Ovary (tissue), 10 donors: ENCODE measurements at regions of chr1 and their contacts with region 1.

Region 1: GRCh38 chr1:11838349-11839272 is 9.0 kb downstream of the NPPA start:
- DNase-seq: peak; percentile 66 to 84 (median 78)
- H3K4me3 ChIP-seq: no peak overlapping the region
- H3K27ac ChIP-seq: no peak overlapping the region
- H3K4me1 ChIP-seq: peaks cover 6% of the 10 kb centered on the region
- H3K27me3 ChIP-seq: no peaks in the 10 kb centered on the region
- CTCF ChIP-seq: peak; percentile 85 to 87 (median 85)
- EP300 ChIP-seq: no peak
- POLR2A ChIP-seq: no peak

Region 2: DNA sequence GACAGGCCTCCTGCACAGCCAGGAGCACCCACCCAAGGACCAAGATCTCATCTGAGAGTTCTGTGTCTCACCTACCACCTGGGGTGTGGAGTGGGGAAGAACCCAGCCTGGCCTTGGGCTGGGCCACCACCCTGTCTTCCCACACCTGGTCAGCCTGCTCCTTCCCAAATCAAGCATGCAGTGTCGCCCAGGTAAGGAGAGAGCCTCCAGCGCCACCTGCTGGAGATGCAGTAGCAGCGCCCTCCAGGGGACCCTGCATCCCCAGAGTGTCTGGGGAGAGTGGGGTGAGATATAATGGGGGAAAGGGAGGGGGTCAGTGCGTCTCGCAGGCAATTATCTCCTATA is 55.3 kb after region 1 on chr1:
- intact Hi-C with region 1: loop called (anchors 5 to 10 kb)
- DNase-seq: peak; percentile 37 to 65 (median 50)
- H3K4me3 ChIP-seq: no peak overlapping the region
- H3K27ac ChIP-seq: no peak overlapping the region
- H3K4me1 ChIP-seq: no peaks in the 10 kb centered on the region
- H3K27me3 ChIP-seq: no peaks in the 10 kb centered on the region
- CTCF ChIP-seq: peak; percentile 30 to 67 (median 46)
- EP300 ChIP-seq: no peak
- POLR2A ChIP-seq: no peak

Region 3: DNA sequence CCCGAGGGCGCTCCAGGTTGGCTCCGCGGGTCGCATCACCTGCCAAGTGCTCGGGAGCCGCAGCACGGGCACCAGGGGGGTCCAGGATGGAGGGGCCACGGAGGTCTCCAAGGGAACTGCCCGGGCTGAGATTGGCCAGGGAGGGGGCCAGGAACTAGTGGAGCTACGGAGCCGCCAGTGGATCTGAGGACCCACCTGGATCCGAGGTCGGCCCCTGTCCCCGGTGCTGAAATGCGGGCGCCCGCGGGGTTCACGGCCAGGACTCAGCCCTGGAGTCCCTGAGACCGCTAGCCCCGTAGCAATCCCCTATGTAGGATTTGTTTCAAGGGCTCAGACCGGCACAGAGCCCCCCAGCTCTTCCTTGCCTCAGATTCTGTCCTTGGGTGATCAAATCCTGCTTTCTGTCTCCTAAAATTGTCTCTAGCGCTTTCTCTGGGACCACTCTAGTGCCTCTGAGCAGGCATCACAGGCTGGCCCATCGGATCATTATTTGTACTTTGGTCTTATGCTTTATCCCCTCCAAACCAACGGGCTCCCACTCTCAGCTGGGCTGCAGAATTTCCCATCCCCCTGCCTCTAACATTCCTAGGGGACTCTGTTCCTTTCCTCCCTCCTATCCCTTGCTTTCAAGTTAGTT is 60.3 kb after region 1 on chr1:
- intact Hi-C with region 1: loop called (anchors 5 to 10 kb)
- DNase-seq: no peak
- H3K4me3 ChIP-seq: no peak overlapping the region
- H3K27ac ChIP-seq: no peak overlapping the region
- H3K4me1 ChIP-seq: no peaks in the 10 kb centered on the region
- H3K27me3 ChIP-seq: no peaks in the 10 kb centered on the region
- CTCF ChIP-seq: no peak
- EP300 ChIP-seq: no peak
- POLR2A ChIP-seq: no peak

Region 4: GRCh38 chr1:11907275-11908094 is 68.9 kb after region 1 on chr1:
- intact Hi-C with region 1: loop called in 1 of 4 experiments (anchors 5 kb)
- DNase-seq: peak; percentile 89 to 96 (median 94)
- H3K4me3 ChIP-seq: no peak overlapping the region
- H3K27ac ChIP-seq: peak overlapping the region; percentile 35 to 97
- H3K4me1 ChIP-seq: no peaks in the 10 kb centered on the region
- H3K27me3 ChIP-seq: no peaks in the 10 kb centered on the region
- CTCF ChIP-seq: peak; percentile 80 to 93 (median 91)
- EP300 ChIP-seq: peak; percentile 61
- POLR2A ChIP-seq: no peak

Region 5: DNA sequence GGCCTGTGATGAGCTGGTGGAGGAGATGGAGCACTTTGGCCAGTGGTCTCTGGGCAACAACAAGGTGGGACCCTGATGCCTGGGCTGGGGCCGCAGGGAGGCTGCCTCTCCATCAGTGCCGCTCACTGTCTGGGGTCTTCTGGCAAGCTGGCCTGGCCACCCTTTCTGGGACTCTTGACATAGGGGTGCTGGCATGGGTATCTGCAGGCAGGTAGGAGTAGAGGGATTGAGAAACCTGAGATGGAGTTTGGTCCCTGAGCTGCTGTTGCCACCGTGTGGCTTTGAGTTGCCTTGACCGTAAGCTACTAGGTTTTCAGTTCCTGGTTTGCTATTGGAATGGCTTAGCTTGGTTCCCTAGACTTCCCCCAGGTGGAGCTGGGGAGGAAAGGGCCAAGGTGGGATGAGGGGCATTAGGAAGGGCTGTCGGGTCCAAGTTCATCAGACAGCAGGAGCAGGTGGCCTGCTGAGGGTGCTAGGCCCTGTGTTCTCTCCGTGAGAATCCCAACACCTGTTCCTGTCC is 128.5 kb after region 1 on chr1:
- intact Hi-C with region 1: loop called in 3 of 4 experiments (anchors 5 to 10 kb)
- DNase-seq: peak in 3 of 5 donors; percentile 29 to 60 (median 33)
- H3K4me3 ChIP-seq: no peak overlapping the region
- H3K27ac ChIP-seq: no peak overlapping the region
- H3K4me1 ChIP-seq: no peaks in the 10 kb centered on the region
- H3K27me3 ChIP-seq: no peaks in the 10 kb centered on the region
- CTCF ChIP-seq: peak in 1 of 3 donors; percentile 11
- EP300 ChIP-seq: no peak
- POLR2A ChIP-seq: no peak

Region 6: DNA sequence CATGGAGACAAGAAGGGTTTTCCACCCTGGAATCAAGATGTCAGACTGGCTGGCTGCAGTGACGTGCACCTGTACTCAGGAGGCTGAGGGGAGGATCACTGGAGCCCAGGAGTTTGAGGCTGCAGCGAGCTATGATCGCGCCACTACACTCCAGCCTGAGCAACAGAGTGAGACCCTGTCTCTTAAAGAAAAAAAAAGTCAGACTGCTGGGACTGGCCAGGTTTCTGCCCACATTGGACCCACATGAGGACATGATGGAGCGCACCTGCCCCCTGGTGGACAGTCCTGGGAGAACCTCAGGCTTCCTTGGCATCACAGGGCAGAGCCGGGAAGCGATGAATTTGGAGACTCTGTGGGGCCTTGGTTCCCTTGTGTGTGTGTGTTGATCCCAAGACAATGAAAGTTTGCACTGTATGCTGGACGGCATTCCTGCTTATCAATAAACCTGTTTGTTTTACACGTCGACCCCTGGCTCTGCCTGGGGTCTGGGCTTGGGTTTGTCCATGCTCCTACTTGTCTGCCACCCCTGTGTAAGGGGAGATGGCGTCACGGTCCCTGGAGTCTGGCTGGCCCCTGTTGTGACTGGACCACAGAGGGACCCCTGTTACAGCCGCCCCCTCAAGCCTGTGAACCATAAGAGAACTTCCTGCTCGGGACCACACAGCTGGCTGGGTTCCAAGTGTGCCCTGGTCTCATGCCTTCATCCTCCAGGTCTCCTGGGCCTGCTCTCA is 370.3 kb after region 1 on chr1:
- intact Hi-C with region 1: loop called in 2 of 4 experiments (anchors 10 kb)
- DNase-seq: peak; percentile 80 to 93 (median 91)
- H3K4me3 ChIP-seq: no peak overlapping the region
- H3K27ac ChIP-seq: no peak overlapping the region
- H3K4me1 ChIP-seq: peaks cover 3% of the 10 kb centered on the region
- H3K27me3 ChIP-seq: no peaks in the 10 kb centered on the region
- CTCF ChIP-seq: peak; percentile 86 to 97 (median 96)
- EP300 ChIP-seq: no peak
- POLR2A ChIP-seq: peak; percentile 29